Heart right ventricle (tissue), 16 donors: ENCODE measurements at regions of chr7 and their contacts with region 1.

Region 1: GRCh38 chr7:76080204-76080603 is 32.3 kb downstream of the MDH2 start:
- DNase-seq: no peak
- ATAC-seq: no peak
- H3K4me3 ChIP-seq: no peak overlapping the region
- H3K27ac ChIP-seq: no peak overlapping the region
- H3K4me1 ChIP-seq: peaks cover 0 to 12% (median 0%) of the 10 kb centered on the region in 9 donors
- H3K27me3 ChIP-seq: no peaks in the 10 kb centered on the region
- CTCF ChIP-seq: no peak

Region 2: DNA sequence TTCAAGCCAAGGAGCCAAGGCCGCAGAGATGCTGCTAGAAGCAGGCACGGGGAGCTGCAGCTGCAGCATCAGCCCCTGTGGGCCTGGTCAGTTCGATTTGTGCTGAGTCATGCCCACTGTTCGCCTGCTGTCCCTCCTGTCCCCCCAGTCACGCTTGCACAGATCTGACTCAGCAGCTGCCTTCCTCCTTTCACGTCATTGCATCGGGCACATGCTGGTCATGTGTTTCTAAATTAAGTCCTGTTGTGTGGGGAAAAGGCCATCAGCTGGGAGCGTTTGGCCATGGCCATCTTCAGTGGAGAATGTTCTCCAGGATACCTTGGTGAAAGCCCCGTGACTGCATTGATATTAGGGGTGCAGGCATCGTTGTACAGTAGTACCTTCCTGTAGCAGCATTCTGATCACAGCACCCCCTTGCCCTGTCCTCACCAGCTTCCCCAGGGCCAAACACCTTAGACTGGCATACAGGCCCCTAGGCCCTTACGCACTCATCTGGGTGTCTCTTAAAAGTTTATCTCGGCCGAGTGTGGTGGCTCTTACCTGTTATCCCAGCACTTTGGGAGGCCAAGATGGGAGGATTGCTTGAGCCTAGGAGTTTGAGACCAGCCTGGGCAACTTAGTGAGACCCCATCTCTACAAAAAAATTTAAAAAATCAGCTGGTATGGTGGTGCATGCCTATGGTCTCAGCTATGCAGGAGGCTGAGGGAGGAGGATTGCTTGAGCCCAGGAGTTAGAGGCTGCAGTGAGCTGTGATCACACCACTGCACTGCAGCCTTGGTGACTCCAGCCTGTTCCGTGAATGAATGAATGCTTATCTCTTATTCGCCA is 142.0 kb before region 1 on chr7:
- intact Hi-C with region 1: no loop called
- DNase-seq: peak; percentile 58 to 75
- ATAC-seq: peak; percentile 74 to 94 (median 90)
- H3K4me3 ChIP-seq: no peak overlapping the region
- H3K27ac ChIP-seq: peak overlapping the region; percentile 17 to 67 (median 49)
- H3K4me1 ChIP-seq: peaks cover 0 to 32% (median 16%) of the 10 kb centered on the region in 9 donors
- H3K27me3 ChIP-seq: no peaks in the 10 kb centered on the region
- CTCF ChIP-seq: no peak

Region 3: GRCh38 chr7:76122516-76123239 is 42.5 kb after region 1 on chr7:
- intact Hi-C with region 1: loop called in 1 of 10 experiments (anchors 5 kb)
- DNase-seq: no peak
- ATAC-seq: no peak
- H3K4me3 ChIP-seq: no peak overlapping the region
- H3K27ac ChIP-seq: no peak overlapping the region
- H3K4me1 ChIP-seq: no peaks in the 10 kb centered on the region
- H3K27me3 ChIP-seq: peaks cover 0 to 4% (median 0%) of the 10 kb centered on the region in 7 donors
- CTCF ChIP-seq: no peak

Region 4: DNA sequence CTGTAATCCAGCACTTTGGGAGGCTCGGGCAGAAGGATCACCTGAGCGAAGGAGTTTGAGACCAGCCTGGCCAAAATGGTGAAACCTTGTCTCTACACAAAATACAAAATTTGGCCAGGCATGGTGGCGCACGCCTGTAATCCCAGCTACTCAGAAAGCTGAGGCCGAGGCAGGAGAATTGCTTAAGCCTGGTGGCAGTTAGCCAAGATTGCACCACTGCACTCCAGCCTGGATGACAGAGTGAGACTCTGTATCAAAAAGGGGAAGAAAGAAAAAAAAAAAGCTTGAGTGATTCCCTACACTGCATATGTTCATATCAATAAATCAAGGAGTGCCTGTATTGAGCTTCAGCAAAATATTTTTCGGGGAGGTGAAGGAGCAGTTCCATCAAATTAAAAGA is 75.7 kb after region 1 on chr7:
- intact Hi-C with region 1: no loop called
- DNase-seq: peak; percentile 34 to 37
- ATAC-seq: peak in 2 of 8 donors; percentile 59
- H3K4me3 ChIP-seq: no peak overlapping the region
- H3K27ac ChIP-seq: no peak overlapping the region
- H3K4me1 ChIP-seq: peaks cover 0 to 8% (median 0%) of the 10 kb centered on the region in 9 donors
- H3K27me3 ChIP-seq: peaks cover 0 to 4% (median 0%) of the 10 kb centered on the region in 7 donors
- CTCF ChIP-seq: no peak

Region 5: GRCh38 chr7:76185187-76185896 is 105.1 kb after region 1 on chr7:
- intact Hi-C with region 1: no loop called
- DNase-seq: no peak
- ATAC-seq: peak in 2 of 8 donors; percentile 29 to 44
- H3K4me3 ChIP-seq: no peak overlapping the region
- H3K27ac ChIP-seq: no peak overlapping the region
- H3K4me1 ChIP-seq: no peaks in the 10 kb centered on the region
- H3K27me3 ChIP-seq: peaks cover 0 to 5% (median 0%) of the 10 kb centered on the region in 7 donors
- CTCF ChIP-seq: no peak